Common myeloid progenitor, CD34-positive (primary cell): ENCODE measurements at regions of chr14 and their contacts with region 1.

Region 1: DNA sequence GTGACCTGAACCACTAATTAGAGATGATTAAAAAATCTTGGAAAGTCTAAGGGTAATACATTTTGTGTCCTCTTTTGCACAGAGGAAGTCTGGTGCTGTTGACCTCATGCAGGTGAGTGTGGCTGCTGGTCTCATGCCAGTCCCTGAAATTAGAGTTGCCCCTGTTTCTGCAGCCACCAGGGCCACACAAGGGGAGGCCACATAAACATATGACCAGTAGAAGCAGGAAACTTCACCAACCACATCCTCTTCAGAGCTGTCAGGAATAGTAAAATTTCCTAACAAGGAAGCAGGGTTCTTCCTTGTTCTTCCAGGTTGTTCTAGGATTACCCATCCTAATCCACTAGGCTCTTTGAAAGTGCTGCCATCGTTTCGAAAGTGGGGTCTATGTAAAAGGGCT is 28.3 kb downstream of the PSMA6 start:
- DNase-seq: peak in 1 of 3 donors; percentile 8
- H3K4me3 ChIP-seq: no peak overlapping the region
- H3K27ac ChIP-seq: peak overlapping the region in 1 of 2 experiments; percentile 25
- H3K4me1 ChIP-seq: peaks cover 2 to 13% (median 9%) of the 10 kb centered on the region in 4 experiments
- H3K27me3 ChIP-seq: no peaks in the 10 kb centered on the region

Region 2: GRCh38 chr14:35341446-35342159 is 21.1 kb after region 1 on chr14:
- CTCF ChIA-PET with region 1: interaction called, 12 read pairs
- POLR2A ChIA-PET with region 1: no interaction called
- DNase-seq: peak; percentile 86 to 96 (median 95)
- H3K4me3 ChIP-seq: peak overlapping the region in 2 of 7 experiments; percentile 33 to 58
- H3K27ac ChIP-seq: peak overlapping the region; percentile 43 to 76
- H3K4me1 ChIP-seq: peaks cover 10 to 70% (median 64%) of the 10 kb centered on the region in 4 experiments
- H3K27me3 ChIP-seq: no peaks in the 10 kb centered on the region

Region 3: DNA sequence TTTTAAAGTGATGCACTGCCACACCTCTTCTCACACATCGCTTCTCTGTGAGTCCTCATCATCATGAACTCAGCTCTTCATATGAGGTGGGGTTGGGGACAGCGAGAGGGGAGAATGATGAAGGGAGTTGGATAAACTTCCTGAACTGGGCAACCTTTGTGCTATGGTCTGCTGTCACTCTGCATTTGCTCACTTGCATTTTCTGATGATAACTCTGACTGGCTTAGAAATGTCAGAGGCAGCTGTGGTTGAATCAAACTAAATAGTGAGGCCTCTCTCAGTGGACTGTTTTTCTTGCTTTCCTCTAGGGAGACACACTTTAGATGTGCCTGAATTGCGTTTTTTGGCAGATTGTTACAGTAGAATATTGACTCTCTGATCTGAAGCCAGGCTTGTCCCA is 139.3 kb after region 1 on chr14:
- CTCF ChIA-PET with region 1: no interaction called
- POLR2A ChIA-PET with region 1: no interaction called
- DNase-seq: no peak
- H3K4me3 ChIP-seq: no peak overlapping the region
- H3K27ac ChIP-seq: no peak overlapping the region
- H3K4me1 ChIP-seq: peaks cover 0 to 2% (median 0%) of the 10 kb centered on the region in 4 experiments
- H3K27me3 ChIP-seq: no peaks in the 10 kb centered on the region